Ovary (tissue), 10 donors: ENCODE measurements at regions of chr10 and their contacts with region 1.

Region 1: DNA sequence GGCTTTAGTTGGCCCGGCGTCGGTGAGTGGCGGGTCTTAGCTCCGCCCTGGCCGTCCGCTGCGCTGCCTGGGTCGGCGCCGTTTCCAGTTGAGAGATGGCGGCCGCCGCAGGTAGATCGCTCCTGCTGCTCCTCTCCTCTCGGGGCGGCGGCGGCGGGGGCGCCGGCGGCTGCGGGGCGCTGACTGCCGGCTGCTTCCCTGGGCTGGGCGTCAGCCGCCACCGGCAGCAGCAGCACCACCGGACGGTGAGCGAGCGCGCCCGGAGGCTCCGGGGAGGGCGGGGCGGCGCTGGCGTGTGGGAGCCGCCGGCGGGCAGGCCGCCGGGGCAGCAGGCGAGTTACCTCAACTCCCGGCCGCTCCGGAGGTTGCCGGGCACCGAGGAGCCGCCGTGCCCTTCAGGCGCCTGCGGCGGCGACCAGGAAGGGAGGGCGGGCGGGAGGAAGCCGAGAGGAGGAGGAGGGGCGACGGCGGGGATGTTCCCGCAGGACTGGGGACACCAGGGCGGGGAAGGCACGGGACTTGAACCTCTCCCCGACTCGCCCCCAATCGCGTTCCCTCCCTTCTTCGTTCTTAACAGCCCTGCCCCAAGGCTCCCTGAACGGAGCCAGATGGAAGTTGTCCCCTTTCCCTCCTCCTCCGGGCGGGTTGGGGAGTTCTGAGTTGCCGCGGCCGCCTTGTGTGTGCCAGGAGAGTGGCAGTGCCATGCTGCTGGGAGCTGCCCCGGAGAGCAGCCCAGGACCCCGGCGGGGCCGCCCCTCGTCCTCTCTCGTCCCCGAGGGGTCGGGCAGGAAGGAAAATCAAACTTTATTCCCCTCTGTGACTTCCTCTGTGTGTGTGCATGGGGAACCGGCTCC is at the start of gene MCU:
- DNase-seq: peak; percentile 94 to 97 (median 95)
- H3K4me3 ChIP-seq: peak within 1 kb of the TSS; percentile 84
- H3K27ac ChIP-seq: peak within 1 kb of the TSS; percentile 89
- H3K4me1 ChIP-seq: peaks cover 2% of the 10 kb centered on the region
- H3K27me3 ChIP-seq: no peaks in the 10 kb centered on the region
- CTCF ChIP-seq: peak in 1 of 3 donors; percentile 10
- EP300 ChIP-seq: no peak
- POLR2A ChIP-seq: peak; percentile 64
- total RNA-seq, gene MCU: 10.9 to 17.8 (median 12.8) TPM

Region 2: GRCh38 chr10:72407927-72408600 is 284.2 kb before region 1 on chr10:
- intact Hi-C with region 1: no loop called
- DNase-seq: no peak
- H3K4me3 ChIP-seq: no peak overlapping the region
- H3K27ac ChIP-seq: no peak overlapping the region
- H3K4me1 ChIP-seq: no peaks in the 10 kb centered on the region
- H3K27me3 ChIP-seq: no peaks in the 10 kb centered on the region
- CTCF ChIP-seq: no peak
- EP300 ChIP-seq: no peak
- POLR2A ChIP-seq: no peak

Region 3: GRCh38 chr10:72625608-72626443 is 66.5 kb before region 1 on chr10 and contains the start of gene MICU1:
- intact Hi-C with region 1: loop called in 1 of 4 experiments (anchors 5 kb)
- DNase-seq: peak; percentile 96 to 97 (median 96)
- H3K4me3 ChIP-seq: peak within 1 kb of the TSS; percentile 70
- H3K27ac ChIP-seq: peak within 1 kb of the TSS; percentile 69 to 87
- H3K4me1 ChIP-seq: peaks cover 7% of the 10 kb centered on the region
- H3K27me3 ChIP-seq: no peaks in the 10 kb centered on the region
- CTCF ChIP-seq: no peak
- EP300 ChIP-seq: no peak
- POLR2A ChIP-seq: peak; percentile 69
- total RNA-seq, gene MICU1: 29.9 to 51.8 (median 44.5) TPM

Region 4: GRCh38 chr10:72784551-72785351 is 92.5 kb after region 1 on chr10:
- intact Hi-C with region 1: loop called in 1 of 4 experiments (anchors 10 kb)
- DNase-seq: peak; percentile 68 to 81 (median 69)
- H3K4me3 ChIP-seq: no peak overlapping the region
- H3K27ac ChIP-seq: no peak overlapping the region
- H3K4me1 ChIP-seq: peaks cover 5% of the 10 kb centered on the region
- H3K27me3 ChIP-seq: no peaks in the 10 kb centered on the region
- CTCF ChIP-seq: no peak
- EP300 ChIP-seq: no peak
- POLR2A ChIP-seq: no peak

Region 5: GRCh38 chr10:72875250-72876055 is 183.2 kb after region 1 on chr10:
- intact Hi-C with region 1: no loop called
- DNase-seq: no peak
- H3K4me3 ChIP-seq: no peak overlapping the region
- H3K27ac ChIP-seq: no peak overlapping the region
- H3K4me1 ChIP-seq: no peaks in the 10 kb centered on the region
- H3K27me3 ChIP-seq: no peaks in the 10 kb centered on the region
- CTCF ChIP-seq: peak in 1 of 3 donors; percentile 38
- EP300 ChIP-seq: no peak
- POLR2A ChIP-seq: no peak